ENCODE measurements at regions of chr5 and their contacts with region 1.

Region 1: GRCh38 chr5:113378959-113379541 is 55.7 kb downstream of the TSSK1B start:
- DNase-seq: peak; percentile 24 to 78 (median 59)
- H3K4me3 ChIP-seq: no peak overlapping the region
- H3K27ac ChIP-seq: no peak overlapping the region
- H3K4me1 ChIP-seq: peaks cover 0 to 12% of the 10 kb centered on the region in 2 donors
- H3K27me3 ChIP-seq: no peaks in the 10 kb centered on the region
- CTCF ChIP-seq: peak; percentile 54 to 76 (median 72)
- POLR2A ChIP-seq: no peak

Region 2: GRCh38 chr5:113250341-113250953 is 128.6 kb before region 1 on chr5:
- intact Hi-C with region 1: no loop called
- DNase-seq: peak in 6 of 7 donors; percentile 42 to 82 (median 54)
- H3K4me3 ChIP-seq: no peak overlapping the region
- H3K27ac ChIP-seq: peak overlapping the region in 2 of 5 donors; percentile 65 to 78
- H3K4me1 ChIP-seq: peaks cover 0 to 15% of the 10 kb centered on the region in 2 donors
- H3K27me3 ChIP-seq: no peaks in the 10 kb centered on the region
- CTCF ChIP-seq: no peak
- POLR2A ChIP-seq: no peak

Region 3: DNA sequence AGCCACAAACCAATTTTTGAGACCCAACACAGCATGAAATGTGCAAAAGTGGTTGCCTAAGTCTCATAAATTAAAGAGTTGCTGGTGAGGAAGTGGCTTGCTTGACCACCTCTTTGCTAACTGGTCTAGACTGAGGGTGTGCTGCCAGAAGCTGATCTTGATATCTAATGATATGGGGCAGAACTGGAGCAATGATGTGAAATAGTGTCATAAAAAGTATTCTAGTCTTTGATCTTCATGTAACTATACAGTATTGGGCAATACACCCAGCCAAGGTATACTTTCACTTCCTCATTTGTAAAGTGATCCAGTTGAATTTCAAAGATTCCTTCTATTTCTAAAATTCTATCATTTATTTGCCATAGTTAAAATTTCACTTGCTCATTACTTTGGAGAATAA is 128.6 kb after region 1 on chr5:
- intact Hi-C with region 1: loop called (anchors 10 kb)
- DNase-seq: no peak
- H3K4me3 ChIP-seq: no peak overlapping the region
- H3K27ac ChIP-seq: no peak overlapping the region
- H3K4me1 ChIP-seq: no peaks in the 10 kb centered on the region
- H3K27me3 ChIP-seq: peaks cover 3% of the 10 kb centered on the region
- CTCF ChIP-seq: no peak
- POLR2A ChIP-seq: no peak

Region 4: DNA sequence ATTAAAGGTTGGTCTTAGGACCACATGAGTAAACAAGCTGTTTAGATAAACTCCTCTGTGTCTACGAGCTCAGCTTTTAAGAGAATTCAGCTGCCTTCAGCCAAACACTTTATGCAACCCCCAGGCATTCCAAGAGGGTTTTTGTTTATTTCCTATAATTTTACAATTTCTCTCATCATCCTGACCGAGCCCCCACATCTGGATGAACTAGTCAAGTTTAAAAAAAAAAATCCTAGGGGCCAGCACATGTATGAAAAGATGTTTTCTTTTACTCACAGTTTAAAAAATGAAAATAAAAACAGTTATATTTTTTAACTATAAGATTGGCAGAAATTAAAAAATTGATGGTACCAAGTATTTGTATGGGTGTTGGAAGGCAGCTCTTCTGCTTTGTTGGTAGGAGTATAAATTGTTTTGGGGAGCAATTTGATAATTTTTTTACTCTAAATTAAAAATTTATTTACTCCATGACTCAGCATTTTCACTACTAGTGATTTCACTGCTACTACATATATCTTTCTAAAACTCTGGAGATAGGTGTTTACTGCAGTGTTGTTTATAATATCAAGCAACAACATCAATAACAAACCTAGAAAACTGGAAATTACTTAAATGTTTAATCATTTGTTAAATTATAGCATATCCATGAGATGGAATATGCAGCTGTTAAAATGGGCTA is 152.6 kb after region 1 on chr5:
- intact Hi-C with region 1: no loop called
- DNase-seq: no peak
- H3K4me3 ChIP-seq: no peak overlapping the region
- H3K27ac ChIP-seq: no peak overlapping the region
- H3K4me1 ChIP-seq: peaks cover 0 to 1% of the 10 kb centered on the region in 2 donors
- H3K27me3 ChIP-seq: no peaks in the 10 kb centered on the region
- CTCF ChIP-seq: no peak
- POLR2A ChIP-seq: no peak

Region 5: GRCh38 chr5:113598926-113599325 is 219.9 kb after region 1 on chr5:
- intact Hi-C with region 1: loop called in 1 of 2 experiments (anchors 5 kb)
- DNase-seq: no peak
- H3K4me3 ChIP-seq: no peak overlapping the region
- H3K27ac ChIP-seq: no peak overlapping the region
- H3K4me1 ChIP-seq: no peaks in the 10 kb centered on the region
- H3K27me3 ChIP-seq: no peaks in the 10 kb centered on the region
- CTCF ChIP-seq: no peak
- POLR2A ChIP-seq: no peak

Measured in adrenal gland (tissue), 19 donors.